Activated naive CD4-positive, alpha-beta T cell treated with anti-CD3 and anti-CD28 coated beads for 36 hours (primary cell): ENCODE measurements at regions of chr2 and their contacts with region 1.

Region 1: DNA sequence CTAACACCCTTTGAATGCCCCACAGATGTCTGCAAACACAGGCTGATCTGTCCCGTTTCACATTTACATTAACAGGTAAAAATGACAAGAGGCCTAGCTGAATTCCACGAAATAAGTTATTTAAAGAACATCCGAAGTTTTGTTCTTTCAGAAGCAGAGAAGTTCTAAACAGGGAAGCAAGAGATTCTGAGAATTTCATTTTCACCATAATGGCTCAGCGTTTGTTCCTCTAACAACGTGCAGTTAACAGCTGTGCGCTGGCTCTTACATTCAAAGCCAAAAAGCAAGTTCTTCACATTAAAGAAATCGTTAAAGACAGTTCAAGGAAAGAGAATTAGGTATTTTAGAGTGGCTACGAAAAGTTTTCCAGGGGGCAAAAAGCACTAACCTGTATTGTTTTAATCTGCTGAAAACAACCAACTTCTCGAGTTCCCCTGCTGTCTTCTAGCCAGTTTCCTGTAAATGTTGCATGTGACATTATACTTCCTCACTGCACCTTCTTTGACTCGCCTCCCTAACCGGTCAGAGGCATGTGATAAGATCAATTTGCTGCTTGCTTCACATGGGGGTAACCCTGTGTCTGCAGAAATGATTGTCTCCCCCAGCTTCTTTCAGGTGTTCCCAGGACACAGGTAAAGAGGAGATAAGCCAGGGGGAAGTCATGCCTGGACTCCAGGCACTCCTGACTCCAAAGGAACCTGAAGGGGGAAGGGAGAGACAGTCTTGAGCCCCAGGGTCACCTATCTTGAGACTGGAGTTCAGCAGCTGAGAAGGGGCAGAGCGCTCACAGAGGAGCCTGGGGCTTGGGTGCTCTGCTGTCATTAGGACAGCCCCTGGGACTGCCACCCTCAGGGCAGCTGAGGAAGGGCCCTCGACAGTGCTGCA is 36.8 kb upstream of the WIPF1 start:
- DNase-seq: peak; percentile 79
- H3K4me3 Mint-ChIP-seq: peak overlapping the region; percentile 91
- H3K27ac Mint-ChIP-seq: peak overlapping the region; percentile 99
- H3K4me1 Mint-ChIP-seq: peaks cover 60% of the 10 kb centered on the region
- H3K27me3 Mint-ChIP-seq: no peaks in the 10 kb centered on the region

Region 2: GRCh38 chr2:174395284-174395968 is 238.9 kb before region 1 on chr2 and contains the start of gene SCRN3:
- CTCF ChIA-PET with region 1: no interaction called
- intact Hi-C with region 1: loop called (anchors 5 kb)
- DNase-seq: peak; percentile 88
- H3K4me3 Mint-ChIP-seq: peak within 1 kb of the TSS; percentile 99
- H3K27ac Mint-ChIP-seq: peak within 1 kb of the TSS; percentile 99
- H3K4me1 Mint-ChIP-seq: peaks cover 38% of the 10 kb centered on the region
- H3K27me3 Mint-ChIP-seq: no peaks in the 10 kb centered on the region
- total RNA-seq, gene SCRN3: 10.7 to 12.3 TPM

Region 3: DNA sequence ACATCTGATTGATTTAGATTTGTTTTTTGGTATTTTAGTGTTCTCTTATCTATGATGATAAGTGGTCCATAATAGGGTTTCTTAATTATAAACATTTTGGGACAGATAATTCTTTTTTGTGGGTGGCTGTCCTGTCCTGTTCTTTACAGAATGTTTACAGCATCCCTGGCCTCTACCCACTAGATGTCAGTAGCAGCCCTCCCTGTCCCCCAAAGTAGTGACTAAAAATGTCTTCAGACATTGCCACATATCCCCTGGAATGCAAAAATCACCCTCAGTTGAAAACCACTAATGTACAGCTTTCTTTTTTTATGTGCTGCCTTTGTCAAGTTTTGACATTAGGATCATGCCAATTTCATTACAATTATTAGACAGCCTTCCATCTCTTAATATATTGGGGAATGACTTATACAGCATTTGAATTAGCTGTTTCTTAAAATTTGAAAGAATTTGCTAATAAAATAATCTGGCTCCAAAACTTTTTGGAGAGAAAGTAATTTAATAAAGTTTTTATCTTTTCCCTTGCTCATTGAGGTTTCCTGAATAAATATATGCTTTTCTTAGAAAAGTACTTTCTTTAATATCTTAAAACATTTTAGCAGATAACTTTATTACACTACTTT is 56.3 kb before region 1 on chr2:
- CTCF ChIA-PET with region 1: interaction called, 12 read pairs
- intact Hi-C with region 1: loop called (anchors 1 kb)
- DNase-seq: peak; percentile 77
- H3K4me3 Mint-ChIP-seq: no peak overlapping the region
- H3K27ac Mint-ChIP-seq: peak overlapping the region; percentile 30
- H3K4me1 Mint-ChIP-seq: peaks cover 69% of the 10 kb centered on the region
- H3K27me3 Mint-ChIP-seq: no peaks in the 10 kb centered on the region

Region 4: GRCh38 chr2:174593574-174594203 is 40.7 kb before region 1 on chr2:
- CTCF ChIA-PET with region 1: interaction called, 172 read pairs
- intact Hi-C with region 1: loop called (anchors 1 kb)
- DNase-seq: peak; percentile 87
- H3K4me3 Mint-ChIP-seq: peak overlapping the region; percentile 77
- H3K27ac Mint-ChIP-seq: peak overlapping the region; percentile 99
- H3K4me1 Mint-ChIP-seq: peaks cover 52% of the 10 kb centered on the region
- H3K27me3 Mint-ChIP-seq: no peaks in the 10 kb centered on the region

Region 5: GRCh38 chr2:174617120-174617519 is 17.3 kb before region 1 on chr2:
- CTCF ChIA-PET with region 1: interaction called, 9 read pairs
- intact Hi-C with region 1: loop called (anchors 1 kb)
- DNase-seq: no peak
- H3K4me3 Mint-ChIP-seq: no peak overlapping the region
- H3K27ac Mint-ChIP-seq: peak overlapping the region; percentile 86
- H3K4me1 Mint-ChIP-seq: peaks cover 78% of the 10 kb centered on the region
- H3K27me3 Mint-ChIP-seq: no peaks in the 10 kb centered on the region

Region 6: GRCh38 chr2:174654419-174654941 is 20.1 kb after region 1 on chr2:
- CTCF ChIA-PET with region 1: interaction called, 7 read pairs
- intact Hi-C with region 1: loop called (anchors 1 kb)
- DNase-seq: no peak
- H3K4me3 Mint-ChIP-seq: no peak overlapping the region
- H3K27ac Mint-ChIP-seq: no peak overlapping the region
- H3K4me1 Mint-ChIP-seq: peaks cover 43% of the 10 kb centered on the region
- H3K27me3 Mint-ChIP-seq: no peaks in the 10 kb centered on the region

Region 7: GRCh38 chr2:174682578-174683391 is 48.4 kb after region 1 on chr2:
- CTCF ChIA-PET with region 1: interaction called, 35 read pairs
- intact Hi-C with region 1: loop called (anchors 1 kb)
- DNase-seq: peak; percentile 49
- H3K4me3 Mint-ChIP-seq: peak overlapping the region; percentile 84
- H3K27ac Mint-ChIP-seq: peak overlapping the region; percentile 83
- H3K4me1 Mint-ChIP-seq: peaks cover 50% of the 10 kb centered on the region
- H3K27me3 Mint-ChIP-seq: no peaks in the 10 kb centered on the region